WTC11 (cell line): ENCODE measurements at regions of chr15 and their contacts with region 1.

Region 1: DNA sequence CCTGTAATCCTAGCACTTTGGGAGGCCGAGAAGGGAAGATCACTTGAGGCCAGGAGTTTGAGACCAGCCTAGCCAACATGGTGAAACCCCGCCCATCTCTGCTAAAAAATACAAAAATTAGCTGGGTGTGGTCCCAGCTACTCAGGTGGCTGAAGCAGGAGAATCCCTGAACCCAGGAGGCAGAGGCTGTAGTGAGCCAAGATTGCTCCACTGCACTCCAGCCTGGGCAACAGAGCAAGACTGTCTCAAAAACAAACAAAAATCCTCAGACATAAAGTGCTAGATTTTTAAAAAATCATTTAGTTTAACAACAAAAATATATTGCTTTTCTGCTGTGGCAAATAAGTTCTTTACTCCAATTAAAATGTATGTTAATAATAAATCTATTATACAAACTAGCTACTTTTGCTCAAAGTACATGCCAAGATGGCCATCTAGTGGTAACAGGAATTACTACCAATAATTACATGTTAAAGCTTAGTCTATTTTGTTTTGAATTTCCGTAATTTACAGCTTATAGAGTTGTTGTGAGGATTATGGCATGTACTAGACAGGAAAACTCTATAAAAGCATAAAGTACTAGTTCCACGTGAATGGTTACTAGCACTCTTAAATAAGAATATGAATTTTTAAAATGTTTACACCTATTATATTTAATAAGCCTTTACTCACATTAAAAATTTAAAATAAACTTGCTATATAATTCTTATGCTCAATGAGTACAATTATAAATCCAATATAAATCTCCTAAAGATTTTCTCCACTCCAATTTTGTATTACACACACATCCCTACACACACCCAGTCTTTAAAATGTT is 39.0 kb downstream of the GABPB1 start:
- DNase-seq: no peak
- ATAC-seq: no peak; the same call in 1 of the 2 replicates
- H3K4me3 Mint-ChIP-seq: no peak overlapping the region
- H3K27ac Mint-ChIP-seq: no peak overlapping the region
- H3K4me1 Mint-ChIP-seq: no peaks in the 10 kb centered on the region
- H3K27me3 Mint-ChIP-seq: no peaks in the 10 kb centered on the region
- CTCF ChIP-seq: peak; percentile 21; the same call in 1 of the 2 replicates

Region 2: DNA sequence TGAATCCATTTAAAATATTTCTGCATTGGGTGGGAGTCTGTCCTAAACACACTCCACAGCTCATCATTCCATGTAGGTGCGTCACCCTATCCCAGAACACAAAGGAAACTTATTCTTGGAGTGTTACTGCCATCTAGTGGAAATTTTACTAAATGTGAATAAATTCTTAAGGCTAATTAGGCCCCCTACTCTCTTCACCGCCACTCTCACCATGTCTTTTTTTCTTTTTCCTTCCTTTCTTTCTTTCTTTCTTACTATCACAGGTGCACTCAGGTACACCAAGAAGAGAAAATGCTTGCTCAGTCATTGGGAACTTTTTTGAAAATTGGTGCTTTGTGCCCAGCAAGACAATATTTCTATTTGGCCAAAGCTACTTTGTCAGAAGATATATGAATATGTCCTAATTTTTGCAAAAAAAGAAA is 170.6 kb before region 1 on chr15:
- CTCF ChIA-PET with region 1: interaction called, 43 read pairs
- POLR2A ChIA-PET with region 1: no interaction called
- DNase-seq: no peak
- ATAC-seq: peak; percentile 80
- H3K4me3 Mint-ChIP-seq: no peak overlapping the region
- H3K27ac Mint-ChIP-seq: no peak overlapping the region
- H3K4me1 Mint-ChIP-seq: peaks cover 4% of the 10 kb centered on the region
- H3K27me3 Mint-ChIP-seq: no peaks in the 10 kb centered on the region
- CTCF ChIP-seq: peak; percentile 40; the same call in 1 of the 2 replicates

Region 3: GRCh38 chr15:50182219-50183013 is 133.6 kb before region 1 on chr15:
- CTCF ChIA-PET with region 1: interaction called, 24 read pairs
- POLR2A ChIA-PET with region 1: no interaction called
- DNase-seq: peak; percentile 79
- ATAC-seq: peak; percentile 62
- H3K4me3 Mint-ChIP-seq: peak overlapping the region; percentile 87
- H3K27ac Mint-ChIP-seq: no peak overlapping the region
- H3K4me1 Mint-ChIP-seq: peaks cover 18% of the 10 kb centered on the region
- H3K27me3 Mint-ChIP-seq: peaks cover 43% of the 10 kb centered on the region
- CTCF ChIP-seq: no peak

Region 4: DNA sequence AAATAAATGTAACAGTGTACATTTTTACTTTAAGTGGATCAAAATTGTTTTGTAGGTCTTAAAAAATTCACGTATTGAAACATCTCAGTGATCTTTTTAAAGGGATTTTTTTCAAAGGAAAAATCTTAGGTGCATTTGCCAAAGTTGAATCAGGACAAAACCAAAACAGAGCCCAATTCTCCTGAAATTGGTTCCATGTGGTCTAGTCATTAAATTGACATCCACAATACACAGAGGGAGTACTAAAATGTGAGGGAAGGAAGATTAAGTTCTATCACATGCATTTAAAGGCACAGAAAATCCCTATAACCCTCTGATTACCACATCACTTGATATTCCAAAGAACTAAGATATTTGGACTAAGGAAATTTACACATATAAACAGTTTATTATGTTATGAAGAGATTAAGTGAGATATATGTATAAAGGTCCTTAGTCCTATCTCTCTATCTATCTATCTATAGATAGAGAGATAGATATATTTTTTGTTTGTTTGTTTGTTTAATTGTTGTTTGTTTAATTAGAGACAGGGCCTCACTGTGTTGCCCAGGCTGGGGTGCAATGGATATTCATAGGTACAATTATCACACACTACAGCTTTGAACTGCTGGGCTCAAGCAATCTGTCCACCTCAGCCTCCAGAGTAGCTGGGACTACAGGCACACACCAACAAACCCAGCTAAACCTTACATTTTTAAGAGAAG is 11.0 kb before region 1 on chr15:
- CTCF ChIA-PET with region 1: interaction called, 12 read pairs
- POLR2A ChIA-PET with region 1: no interaction called
- DNase-seq: no peak
- ATAC-seq: no peak
- H3K4me3 Mint-ChIP-seq: no peak overlapping the region
- H3K27ac Mint-ChIP-seq: no peak overlapping the region
- H3K4me1 Mint-ChIP-seq: no peaks in the 10 kb centered on the region
- H3K27me3 Mint-ChIP-seq: no peaks in the 10 kb centered on the region
- CTCF ChIP-seq: no peak

Region 5: GRCh38 chr15:50330921-50331320 is 14.9 kb after region 1 on chr15:
- CTCF ChIA-PET with region 1: interaction called, 11 read pairs
- POLR2A ChIA-PET with region 1: no interaction called
- DNase-seq: no peak
- ATAC-seq: peak; percentile 47; the same call in 1 of the 2 replicates
- H3K4me3 Mint-ChIP-seq: no peak overlapping the region
- H3K27ac Mint-ChIP-seq: peak overlapping the region; percentile 61
- H3K4me1 Mint-ChIP-seq: peaks cover 22% of the 10 kb centered on the region
- H3K27me3 Mint-ChIP-seq: no peaks in the 10 kb centered on the region
- CTCF ChIP-seq: no peak

Region 6: DNA sequence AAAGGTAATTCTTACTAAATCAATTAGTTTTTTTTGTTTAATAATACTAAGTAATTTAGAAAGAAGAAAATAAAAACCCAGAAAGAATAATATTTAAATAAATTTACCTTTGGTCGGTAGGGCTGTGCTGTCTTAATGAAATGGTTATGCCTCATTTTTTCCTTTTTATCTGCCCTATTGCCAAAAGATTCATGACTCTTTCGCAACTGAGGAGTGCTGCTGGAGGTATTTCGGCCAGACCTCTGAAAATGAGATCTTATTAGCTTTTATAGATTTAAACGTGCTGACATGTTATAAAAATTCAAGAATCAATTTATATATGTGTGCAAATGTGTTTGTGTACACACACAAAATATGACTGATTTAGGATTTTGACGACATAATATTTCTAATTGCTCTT is 297.6 kb after region 1 on chr15:
- CTCF ChIA-PET with region 1: no interaction called
- POLR2A ChIA-PET with region 1: no interaction called
- DNase-seq: no peak
- ATAC-seq: no peak
- H3K4me3 Mint-ChIP-seq: no peak overlapping the region
- H3K27ac Mint-ChIP-seq: no peak overlapping the region
- H3K4me1 Mint-ChIP-seq: no peaks in the 10 kb centered on the region
- H3K27me3 Mint-ChIP-seq: no peaks in the 10 kb centered on the region
- CTCF ChIP-seq: no peak